Endothelial cell of umbilical vein (primary cell): ENCODE measurements at regions of chr12 and their contacts with region 1.

Region 1: DNA sequence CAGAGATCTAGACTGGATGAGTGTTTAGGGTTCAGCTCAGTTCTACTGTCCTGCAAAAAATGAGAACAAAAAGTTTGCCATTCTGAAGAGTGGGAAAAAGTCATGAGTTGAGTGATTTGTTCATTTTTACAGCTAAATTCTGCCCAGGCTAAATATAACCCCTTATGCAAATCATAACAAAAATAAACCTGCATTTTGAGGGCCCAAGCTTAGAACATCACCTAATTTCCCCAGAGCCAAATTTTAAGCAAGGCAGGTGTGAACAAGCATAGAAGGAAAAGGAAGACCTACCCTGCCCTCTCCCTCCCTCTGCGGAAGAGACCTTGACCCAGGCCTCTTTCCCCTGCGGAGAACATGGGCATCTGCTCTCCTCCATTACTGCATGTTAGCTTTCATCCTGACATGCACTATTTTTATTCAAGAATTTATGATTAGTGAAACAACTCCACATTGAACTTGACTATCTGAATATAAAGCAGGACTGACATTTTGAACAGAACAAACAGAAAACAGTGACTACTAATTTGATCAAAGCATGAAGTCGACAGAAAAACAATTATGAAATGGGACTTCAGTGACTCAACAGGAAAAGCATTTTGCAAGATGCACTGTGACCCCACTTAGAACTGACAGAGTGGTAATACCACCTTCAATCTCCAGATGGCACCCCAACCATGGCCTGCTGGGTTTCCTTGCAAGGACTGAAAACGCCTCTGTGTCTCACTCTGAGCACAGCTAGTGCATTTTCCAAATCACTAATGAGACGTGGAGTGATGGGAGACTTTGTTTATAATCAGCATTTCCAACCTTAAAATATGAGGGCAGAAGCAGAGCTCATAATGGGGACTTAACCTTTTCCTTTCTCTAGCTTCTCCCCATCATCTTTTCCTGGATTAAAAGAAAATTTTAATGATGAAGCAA is 30.9 kb upstream of the SELPLG start:
- DNase-seq: peak; percentile 99
- H3K4me3 ChIP-seq: peak overlapping the region in 1 of 3 experiments; percentile 45
- H3K27ac ChIP-seq: peak overlapping the region; percentile 82
- H3K4me1 ChIP-seq: peaks cover 20% of the 10 kb centered on the region
- H3K27me3 ChIP-seq: no peaks in the 10 kb centered on the region
- CTCF ChIP-seq: peak; percentile 84 to 93
- POLR2A ChIP-seq: no peak

Region 2: DNA sequence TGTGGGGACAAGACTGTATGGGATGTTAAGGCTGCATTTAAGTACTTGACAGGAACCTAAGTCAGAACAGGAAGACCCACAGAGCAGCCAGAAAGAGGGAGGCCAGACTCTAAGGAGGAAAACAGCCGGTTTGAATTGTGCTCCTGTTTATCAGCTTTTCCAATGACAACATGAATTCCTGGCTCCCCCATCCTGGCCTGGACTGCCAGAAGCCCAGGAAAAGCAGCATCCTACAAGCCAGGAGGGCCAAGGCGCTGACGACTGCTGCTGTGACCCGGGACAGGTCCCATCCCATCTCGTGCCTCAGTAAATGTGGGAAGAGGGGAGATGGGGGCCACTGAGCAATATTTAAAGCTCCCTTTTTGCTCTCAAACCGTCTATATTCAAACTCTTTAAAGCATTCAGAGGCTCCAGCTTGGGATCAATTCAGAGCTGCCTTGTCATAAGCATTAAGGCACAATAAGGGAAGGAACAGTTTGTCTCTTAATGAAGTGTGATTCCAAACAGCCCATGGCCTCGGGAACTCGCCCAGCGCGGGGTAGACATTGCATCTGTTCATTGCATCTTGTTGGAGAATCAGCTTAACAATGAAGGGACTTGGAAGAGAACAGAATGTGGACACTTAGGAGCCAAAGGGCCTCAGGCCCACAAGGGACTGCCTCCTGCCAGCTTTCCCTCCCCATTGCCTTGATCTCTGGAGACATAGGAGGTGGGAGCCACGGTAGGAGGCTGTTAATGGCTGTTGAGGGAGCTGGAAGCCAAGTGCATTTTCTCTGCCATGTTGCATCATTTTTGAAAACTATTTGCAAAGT is 375.0 kb before region 1 on chr12:
- CTCF ChIA-PET with region 1: no interaction called
- POLR2A ChIA-PET with region 1: no interaction called
- dilution Hi-C with region 1: no loop called
- intact Hi-C with region 1: no loop called
- DNase-seq: peak; percentile 13
- H3K4me3 ChIP-seq: no peak overlapping the region
- H3K27ac ChIP-seq: no peak overlapping the region
- H3K4me1 ChIP-seq: no peaks in the 10 kb centered on the region
- H3K27me3 ChIP-seq: peaks cover 0 to 5% of the 10 kb centered on the region in 2 experiments
- CTCF ChIP-seq: no peak
- POLR2A ChIP-seq: no peak

Region 3: DNA sequence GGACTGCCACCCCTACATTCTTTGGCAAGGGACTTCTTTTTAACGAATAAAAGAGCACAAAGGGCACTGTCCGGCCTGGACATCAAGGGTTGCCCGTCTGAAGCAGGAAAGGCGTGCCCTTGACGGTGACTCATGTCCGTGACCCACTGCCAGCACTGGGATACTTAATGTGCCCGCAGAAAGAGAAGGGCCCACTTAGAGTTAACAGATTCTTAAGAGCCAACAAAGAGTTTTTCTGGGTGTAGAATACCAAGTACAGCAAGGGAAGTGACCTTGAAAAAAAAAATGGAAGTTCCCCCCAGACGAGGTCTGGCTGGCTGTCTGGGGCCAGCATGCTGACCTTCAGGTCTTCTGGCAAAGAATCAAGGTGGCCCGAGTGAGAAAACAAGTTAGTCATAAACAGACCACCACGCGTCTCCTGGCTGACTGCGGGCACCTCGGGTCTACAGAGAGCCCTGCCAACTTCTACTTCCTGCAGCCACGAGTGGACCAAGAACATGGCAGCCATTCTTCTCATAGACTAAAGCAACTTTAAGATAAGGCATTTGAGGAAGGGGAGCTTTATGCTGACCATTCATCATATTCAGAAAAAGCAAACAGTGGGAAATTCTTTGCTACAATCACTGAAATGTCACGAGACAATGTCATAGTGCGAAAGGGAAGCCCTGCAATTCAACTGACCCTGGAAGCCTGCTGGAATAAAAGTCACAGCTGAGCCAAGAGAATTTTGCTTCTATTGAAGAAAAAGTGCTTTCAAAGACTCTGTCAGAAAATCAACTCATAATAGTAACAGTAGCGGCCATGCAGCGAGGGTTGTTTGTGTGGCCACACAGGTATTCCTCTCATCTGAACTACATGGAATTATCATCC is 20.4 kb before region 1 on chr12:
- CTCF ChIA-PET with region 1: interaction called, 16 read pairs
- POLR2A ChIA-PET with region 1: no interaction called
- dilution Hi-C with region 1: no loop called
- intact Hi-C with region 1: loop called (anchors 2 kb)
- DNase-seq: peak; percentile 92
- H3K4me3 ChIP-seq: no peak overlapping the region
- H3K27ac ChIP-seq: peak overlapping the region; percentile 76
- H3K4me1 ChIP-seq: peaks cover 48% of the 10 kb centered on the region
- H3K27me3 ChIP-seq: no peaks in the 10 kb centered on the region
- CTCF ChIP-seq: no peak
- POLR2A ChIP-seq: no peak

Region 4: GRCh38 chr12:108685469-108686260 is 21.1 kb after region 1 on chr12:
- CTCF ChIA-PET with region 1: interaction called, 59 read pairs
- POLR2A ChIA-PET with region 1: interaction called, 9 read pairs
- dilution Hi-C with region 1: no loop called
- intact Hi-C with region 1: loop called (anchors 1 kb)
- DNase-seq: peak; percentile 92
- H3K4me3 ChIP-seq: no peak overlapping the region
- H3K27ac ChIP-seq: peak overlapping the region; percentile 50
- H3K4me1 ChIP-seq: peaks cover 53% of the 10 kb centered on the region
- H3K27me3 ChIP-seq: no peaks in the 10 kb centered on the region
- CTCF ChIP-seq: no peak
- POLR2A ChIP-seq: no peak

Region 5: DNA sequence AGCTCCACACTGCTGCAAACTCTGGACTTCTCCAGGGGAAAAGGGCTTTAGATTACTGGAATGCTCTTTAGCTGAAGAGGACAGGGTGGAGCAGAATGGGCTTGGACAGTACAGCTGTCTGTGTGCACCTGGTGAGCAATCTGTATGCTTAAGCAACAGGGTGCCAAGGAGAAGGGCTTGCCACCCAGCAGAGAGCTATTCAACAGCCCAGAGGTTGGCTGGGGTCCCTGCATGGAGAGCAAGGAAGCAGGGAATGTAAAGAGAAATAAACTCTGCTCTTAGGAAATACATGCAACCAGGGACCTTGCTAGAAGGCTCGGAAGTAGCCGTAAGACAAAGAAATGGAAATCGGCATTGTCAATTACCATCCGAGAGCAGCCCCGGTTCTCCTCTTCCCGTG is 119.7 kb after region 1 on chr12:
- CTCF ChIA-PET with region 1: interaction called, 16 read pairs
- POLR2A ChIA-PET with region 1: no interaction called
- dilution Hi-C with region 1: no loop called
- intact Hi-C with region 1: no loop called
- DNase-seq: no peak
- H3K4me3 ChIP-seq: no peak overlapping the region
- H3K27ac ChIP-seq: no peak overlapping the region
- H3K4me1 ChIP-seq: no peaks in the 10 kb centered on the region
- H3K27me3 ChIP-seq: no peaks in the 10 kb centered on the region
- CTCF ChIP-seq: no peak
- POLR2A ChIP-seq: no peak

Region 6: DNA sequence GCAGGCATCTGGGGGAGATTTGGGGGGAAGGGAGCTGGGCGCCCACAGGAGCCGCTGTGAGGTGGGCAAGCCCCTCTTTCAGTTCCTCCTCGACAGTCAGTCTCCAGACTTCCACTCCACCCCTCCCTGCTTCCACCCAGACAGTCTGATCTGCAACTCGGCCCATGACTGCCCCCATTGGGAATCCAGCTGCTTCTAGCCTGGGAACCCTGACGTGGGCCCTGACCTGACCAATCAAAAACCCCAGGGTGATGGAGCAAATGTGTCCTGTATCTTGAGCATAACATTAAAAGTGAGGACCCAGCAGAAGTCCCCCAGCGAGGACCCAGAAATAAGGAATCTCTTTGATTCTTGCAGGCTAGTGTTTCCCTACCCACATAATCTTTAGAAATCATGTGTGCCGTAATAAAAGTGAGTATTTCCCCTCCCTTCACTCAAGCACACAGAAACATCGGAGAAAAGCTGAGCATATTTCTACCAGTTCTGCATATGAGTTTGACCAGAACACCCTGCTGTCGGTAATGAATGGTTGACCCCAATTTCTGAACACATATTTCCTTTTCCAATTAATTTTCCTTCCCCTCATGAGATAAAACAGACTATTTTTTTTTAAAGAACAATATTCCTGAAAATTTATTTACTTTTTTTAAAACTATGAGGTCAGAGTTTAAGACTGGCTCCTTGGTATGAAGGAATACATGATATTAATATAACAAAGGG is 186.4 kb after region 1 on chr12:
- CTCF ChIA-PET with region 1: interaction called, 11 read pairs
- POLR2A ChIA-PET with region 1: interaction called, 3 read pairs
- dilution Hi-C with region 1: loop called (anchors 25 kb)
- intact Hi-C with region 1: loop called (anchors 1 kb)
- DNase-seq: peak; percentile 95
- H3K4me3 ChIP-seq: peak overlapping the region in 2 of 3 experiments; percentile 47 to 74
- H3K27ac ChIP-seq: peak overlapping the region; percentile 98
- H3K4me1 ChIP-seq: peaks cover 51% of the 10 kb centered on the region
- H3K27me3 ChIP-seq: no peaks in the 10 kb centered on the region
- CTCF ChIP-seq: peak; percentile 20 to 28
- POLR2A ChIP-seq: no peak

Region 7: GRCh38 chr12:109093022-109093918 is 428.7 kb after region 1 on chr12 and contains the start of gene ALKBH2:
- CTCF ChIA-PET with region 1: interaction called, 4 read pairs
- POLR2A ChIA-PET with region 1: no interaction called
- dilution Hi-C with region 1: no loop called
- intact Hi-C with region 1: loop called (anchors 1 kb)
- DNase-seq: peak; percentile 89
- H3K4me3 ChIP-seq: peak within 1 kb of the TSS in 2 of 3 experiments; percentile 33 to 41
- H3K27ac ChIP-seq: peak within 1 kb of the TSS; percentile 43
- H3K4me1 ChIP-seq: peaks cover 7% of the 10 kb centered on the region
- H3K27me3 ChIP-seq: no peaks in the 10 kb centered on the region
- CTCF ChIP-seq: peak; percentile 99 to 100
- POLR2A ChIP-seq: peak; percentile 67
- total RNA-seq, gene ALKBH2: 5.4 TPM in 2 replicates